T-cell (primary cell): ENCODE measurements at regions of chr18 and their contacts with region 1.

Region 1: DNA sequence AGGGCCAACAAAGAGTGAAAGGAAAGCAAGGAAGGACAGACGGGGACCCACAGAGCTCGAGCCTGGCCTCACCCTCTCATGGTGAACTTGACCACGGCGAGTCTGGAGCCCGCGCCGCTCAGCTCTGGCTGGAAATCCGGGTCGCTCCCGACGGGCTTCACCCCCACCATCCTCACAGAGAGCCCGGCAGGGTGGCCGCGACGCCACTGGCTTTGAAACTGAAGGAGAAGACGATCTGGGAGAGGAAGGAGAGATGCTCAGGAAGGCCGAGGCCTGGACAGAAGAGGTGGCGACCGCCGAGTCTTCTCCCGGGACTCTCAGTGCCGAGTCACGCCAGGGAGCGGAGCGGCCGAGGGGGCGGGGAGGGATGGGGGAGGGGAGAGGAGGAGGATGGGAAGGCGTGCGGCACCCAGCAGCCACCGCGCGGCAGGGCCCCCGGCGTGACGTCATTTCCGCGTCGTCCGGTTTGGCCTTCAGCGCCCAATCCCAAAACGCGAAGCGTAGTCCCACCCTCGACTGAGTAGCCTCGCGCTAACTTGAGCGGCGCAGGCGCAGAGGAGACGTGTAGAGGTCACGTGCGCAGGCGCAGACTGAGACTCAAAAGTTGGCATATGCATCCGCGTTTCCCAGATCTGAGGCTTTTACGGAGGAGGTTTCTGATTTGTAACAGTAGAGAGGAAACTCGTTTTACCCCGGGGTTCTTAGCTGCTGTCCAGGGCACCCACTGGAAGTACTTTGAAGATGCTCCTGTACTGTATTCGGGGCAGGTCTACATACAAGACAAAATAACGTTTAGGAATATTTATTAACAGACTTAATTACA is at the start of gene TXNL1:
- DNase-seq: peak; percentile 94 to 99 (median 98)
- ATAC-seq: peak; percentile 97 to 99 (median 98)
- H3K4me3 ChIP-seq: peak within 1 kb of the TSS; percentile 93
- H3K4me3 Mint-ChIP-seq: peak within 1 kb of the TSS; percentile 97 to 99 (median 98)
- H3K27ac ChIP-seq: peak within 1 kb of the TSS; percentile 91
- H3K27ac Mint-ChIP-seq: peak within 1 kb of the TSS; percentile 91 to 99
- H3K4me1 ChIP-seq: peaks cover 12 to 17% of the 10 kb centered on the region in 2 experiments
- H3K4me1 Mint-ChIP-seq: peaks cover 47 to 61% (median 53%) of the 10 kb centered on the region in 3 donors
- H3K27me3 ChIP-seq: no peaks in the 10 kb centered on the region
- H3K27me3 Mint-ChIP-seq: no peaks in the 10 kb centered on the region
- total RNA-seq, gene TXNL1: 33.6 to 40.2 (median 35.7) TPM

Region 2: DNA sequence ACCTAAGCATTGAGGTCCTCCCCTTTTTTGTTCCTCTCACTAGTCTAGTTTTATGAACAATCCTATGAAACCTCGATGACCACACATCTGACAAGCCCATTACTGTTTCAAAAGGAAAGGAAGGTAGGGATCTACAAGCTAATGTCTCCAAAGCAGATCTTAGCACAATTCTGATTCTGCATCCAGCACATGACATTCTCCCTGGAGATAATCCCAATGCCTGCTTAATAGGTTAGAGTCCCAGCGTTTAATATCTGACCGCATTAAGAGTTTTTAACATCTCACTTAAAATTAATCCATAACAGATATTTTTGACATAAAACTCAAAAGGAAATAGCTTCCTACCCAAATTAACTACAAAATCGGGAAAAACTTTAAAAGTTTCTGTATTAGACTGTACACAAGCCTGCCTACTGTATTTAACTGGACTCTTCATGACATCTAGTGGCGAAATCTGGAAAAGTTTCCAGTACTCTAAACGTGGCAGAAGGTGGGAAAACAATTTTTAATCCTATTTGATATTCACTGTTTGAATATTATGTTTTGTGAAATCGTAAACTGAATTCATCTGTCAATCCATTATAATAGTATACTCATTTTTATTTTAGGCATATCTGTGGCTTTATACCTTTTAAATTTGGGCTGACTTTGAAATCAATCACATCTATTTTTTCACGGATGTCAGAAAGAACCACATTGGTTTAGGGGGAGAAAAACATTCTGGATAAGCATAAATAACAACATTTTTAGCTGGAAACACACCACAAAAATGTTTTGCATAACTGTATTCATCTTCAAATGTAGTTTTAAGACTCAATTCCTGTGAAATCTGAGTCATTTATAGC is 62.4 kb before region 1 on chr18:
- CTCF ChIA-PET with region 1: no interaction called
- POLR2A ChIA-PET with region 1: no interaction called
- DNase-seq: peak in 1 of 35 experiments; percentile 45
- ATAC-seq: no peak
- H3K4me3 ChIP-seq: no peak overlapping the region
- H3K4me3 Mint-ChIP-seq: no peak overlapping the region
- H3K27ac ChIP-seq: no peak overlapping the region
- H3K27ac Mint-ChIP-seq: no peak overlapping the region
- H3K4me1 ChIP-seq: no peaks in the 10 kb centered on the region
- H3K4me1 Mint-ChIP-seq: no peaks in the 10 kb centered on the region
- H3K27me3 ChIP-seq: peaks cover 0 to 9% of the 10 kb centered on the region in 2 experiments
- H3K27me3 Mint-ChIP-seq: peaks cover 4 to 33% of the 10 kb centered on the region in 2 donors

Region 3: DNA sequence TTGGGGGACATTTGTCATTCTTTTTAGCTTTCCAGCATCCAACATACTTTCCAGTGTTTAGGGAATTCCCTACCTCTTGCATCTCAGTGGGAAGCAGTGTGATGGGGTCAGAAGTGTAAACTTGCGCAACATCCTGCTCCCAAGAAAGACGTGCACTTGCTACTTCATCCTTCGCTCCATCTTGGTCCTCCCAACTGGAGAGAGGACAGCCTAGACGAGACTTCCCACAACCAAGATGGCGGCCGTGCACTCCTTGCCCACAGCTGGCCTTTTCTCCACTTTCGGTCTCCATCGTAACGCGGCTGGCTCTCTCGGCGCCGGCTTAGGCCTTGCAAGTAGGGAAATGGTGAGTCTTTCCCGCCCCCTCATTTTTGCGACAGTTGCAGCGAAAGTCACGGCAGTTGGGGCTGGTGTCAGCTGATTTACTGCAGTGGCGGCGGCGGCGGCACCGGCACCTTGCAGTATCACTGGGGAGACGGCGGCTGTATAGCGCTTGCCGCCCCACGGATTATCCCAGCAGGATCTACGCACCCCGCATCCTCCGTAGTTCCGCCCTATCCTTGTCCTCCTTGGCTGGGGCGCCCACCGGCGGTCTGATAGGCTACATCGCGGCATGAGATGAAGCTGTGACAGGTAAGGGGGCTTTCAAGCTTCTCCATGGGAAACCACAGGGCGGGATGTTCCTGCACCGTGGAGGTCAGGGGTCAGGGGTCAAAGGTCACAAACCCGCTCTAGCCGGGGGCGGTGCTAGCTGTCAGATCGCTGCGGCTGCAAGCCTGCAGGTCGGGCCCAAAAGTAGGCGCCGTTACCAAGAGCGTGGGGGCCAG is 12.7 kb after region 1 on chr18 and contains the start of gene WDR7:
- CTCF ChIA-PET with region 1: interaction called, 7 to 16 read pairs
- POLR2A ChIA-PET with region 1: interaction called, 3 to 5 read pairs
- DNase-seq: peak; percentile 82 to 97 (median 94)
- ATAC-seq: peak; percentile 91 to 94 (median 92)
- H3K4me3 ChIP-seq: peak within 1 kb of the TSS; percentile 94
- H3K4me3 Mint-ChIP-seq: peak within 1 kb of the TSS; percentile 89 to 97 (median 95)
- H3K27ac ChIP-seq: peak within 1 kb of the TSS; percentile 86
- H3K27ac Mint-ChIP-seq: peak within 1 kb of the TSS; percentile 94 to 95
- H3K4me1 ChIP-seq: peaks cover 18 to 20% of the 10 kb centered on the region in 2 experiments
- H3K4me1 Mint-ChIP-seq: peaks cover 55 to 66% (median 65%) of the 10 kb centered on the region in 3 donors
- H3K27me3 ChIP-seq: no peaks in the 10 kb centered on the region
- H3K27me3 Mint-ChIP-seq: no peaks in the 10 kb centered on the region
- total RNA-seq, gene WDR7: 35.9 to 65.6 (median 41.5) TPM

Region 4: GRCh38 chr18:56748698-56749268 is 110.3 kb after region 1 on chr18:
- CTCF ChIA-PET with region 1: no interaction called
- POLR2A ChIA-PET with region 1: no interaction called
- DNase-seq: peak in 1 of 35 experiments; percentile 51
- ATAC-seq: no peak
- H3K4me3 ChIP-seq: no peak overlapping the region
- H3K4me3 Mint-ChIP-seq: no peak overlapping the region
- H3K27ac ChIP-seq: no peak overlapping the region
- H3K27ac Mint-ChIP-seq: no peak overlapping the region
- H3K4me1 ChIP-seq: peaks cover 0 to 12% of the 10 kb centered on the region in 2 experiments
- H3K4me1 Mint-ChIP-seq: peaks cover 13 to 24% (median 24%) of the 10 kb centered on the region in 3 donors
- H3K27me3 ChIP-seq: no peaks in the 10 kb centered on the region
- H3K27me3 Mint-ChIP-seq: no peaks in the 10 kb centered on the region